ENCODE measurements at regions of chr5 and their contacts with region 1.

Region 1: GRCh38 chr5:176660860-176661641 is 13.8 kb downstream of the TSPAN17 start:
- DNase-seq: peak; percentile 79 to 88 (median 86)
- ATAC-seq: peak; percentile 76 to 78
- H3K4me3 ChIP-seq: no peak overlapping the region
- H3K27ac ChIP-seq: no peak overlapping the region
- H3K4me1 ChIP-seq: no peaks in the 10 kb centered on the region
- H3K27me3 ChIP-seq: no peaks in the 10 kb centered on the region

Region 2: GRCh38 chr5:176810084-176810597 is 149.1 kb after region 1 on chr5 and contains the start of gene UNC5A:
- intact Hi-C with region 1: loop called in 1 of 4 experiments (anchors 5 kb)
- DNase-seq: peak in 1 of 3 donors; percentile 54
- ATAC-seq: no peak
- H3K4me3 ChIP-seq: peak within 1 kb of the TSS; percentile 45
- H3K27ac ChIP-seq: no peak within 1 kb of the TSS
- H3K4me1 ChIP-seq: no peaks in the 10 kb centered on the region
- H3K27me3 ChIP-seq: no peaks in the 10 kb centered on the region
- total RNA-seq, gene UNC5A: 0.17 to 0.85 (median 0.44) TPM

Region 3: GRCh38 chr5:176948458-176948857 is 287.4 kb after region 1 on chr5:
- intact Hi-C with region 1: loop called in 1 of 4 experiments (anchors 10 kb)
- DNase-seq: no peak
- ATAC-seq: peak in 1 of 2 donors; percentile 28
- H3K4me3 ChIP-seq: no peak overlapping the region
- H3K27ac ChIP-seq: no peak overlapping the region
- H3K4me1 ChIP-seq: no peaks in the 10 kb centered on the region
- H3K27me3 ChIP-seq: no peaks in the 10 kb centered on the region

Region 4: GRCh38 chr5:176959051-176959450 is 298.0 kb after region 1 on chr5:
- intact Hi-C with region 1: loop called in 2 of 4 experiments (anchors 5 kb)
- DNase-seq: no peak
- ATAC-seq: no peak
- H3K4me3 ChIP-seq: no peak overlapping the region
- H3K27ac ChIP-seq: no peak overlapping the region
- H3K4me1 ChIP-seq: no peaks in the 10 kb centered on the region
- H3K27me3 ChIP-seq: no peaks in the 10 kb centered on the region

Region 5: GRCh38 chr5:177113566-177114424 is 452.7 kb after region 1 on chr5:
- intact Hi-C with region 1: loop called in 3 of 4 experiments (anchors 2 to 10 kb)
- DNase-seq: peak; percentile 65 to 90 (median 87)
- ATAC-seq: peak; percentile 20 to 61
- H3K4me3 ChIP-seq: no peak overlapping the region
- H3K27ac ChIP-seq: no peak overlapping the region
- H3K4me1 ChIP-seq: peaks cover 4% of the 10 kb centered on the region
- H3K27me3 ChIP-seq: no peaks in the 10 kb centered on the region